Activated T-helper 2 cell treated with anti-CD3 and anti-CD28 coated beads, Interferon-gamma antibody, Interleukin-2, Interleukin-4, amounts not matched to agents 10 μg/mL and 5 μg/mL and 100 μg/mL, durations not matched to agents 14 hours and 24 hours and 36 hours (primary cell): ENCODE measurements at regions of chr5 and their contacts with region 1.

Region 1: DNA sequence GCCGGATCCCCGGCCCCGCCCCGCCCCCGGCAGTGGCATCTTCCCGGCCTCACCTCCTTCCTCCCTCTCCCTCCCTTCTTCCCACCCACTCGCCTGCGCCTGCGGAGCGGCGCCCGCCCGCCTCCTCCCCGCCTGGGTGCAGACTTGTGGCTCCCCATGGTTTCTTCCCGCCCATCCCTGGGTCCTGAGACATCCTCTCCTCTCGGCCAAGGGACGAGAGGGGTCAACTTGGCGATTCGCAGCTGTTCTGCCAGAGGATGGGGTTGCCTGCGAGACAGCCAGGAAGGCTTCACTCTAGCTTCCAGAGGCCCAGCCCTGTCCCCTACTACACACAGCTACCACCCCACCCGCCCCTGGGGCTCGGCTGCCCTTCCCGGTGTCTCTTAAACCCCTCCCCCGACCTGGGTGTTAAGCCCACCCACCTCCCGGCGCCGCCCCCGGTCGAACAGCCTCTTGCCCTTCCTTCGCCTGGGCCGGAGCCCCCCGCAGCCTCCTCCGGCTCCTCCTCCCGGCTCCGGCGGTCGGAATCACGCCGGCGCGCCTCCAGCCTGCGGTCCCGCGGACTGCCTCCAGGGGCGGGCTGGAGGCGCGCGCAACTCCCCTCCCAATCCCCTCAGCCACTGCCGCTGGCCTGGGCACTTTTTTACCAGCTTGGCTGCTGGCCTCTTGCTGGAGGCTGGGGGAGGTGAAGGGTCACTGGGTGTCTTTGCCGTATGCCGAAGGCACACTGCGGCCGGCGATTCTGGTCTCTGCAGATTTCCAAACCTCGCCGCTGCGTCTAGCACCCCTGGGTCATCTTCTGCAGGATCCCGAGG is 1.9 kb downstream of the JADE2 start:
- DNase-seq: peak; percentile 61
- H3K4me3 Mint-ChIP-seq: peak overlapping the region; percentile 97
- H3K27ac Mint-ChIP-seq: peak overlapping the region; percentile 94
- H3K4me1 Mint-ChIP-seq: peaks cover 25% of the 10 kb centered on the region
- H3K27me3 Mint-ChIP-seq: no peaks in the 10 kb centered on the region

Region 2: GRCh38 chr5:134189031-134189430 is 338.3 kb before region 1 on chr5:
- intact Hi-C with region 1: no loop called
- DNase-seq: no peak
- H3K4me3 Mint-ChIP-seq: no peak overlapping the region
- H3K27ac Mint-ChIP-seq: no peak overlapping the region
- H3K4me1 Mint-ChIP-seq: no peaks in the 10 kb centered on the region
- H3K27me3 Mint-ChIP-seq: no peaks in the 10 kb centered on the region

Region 3: DNA sequence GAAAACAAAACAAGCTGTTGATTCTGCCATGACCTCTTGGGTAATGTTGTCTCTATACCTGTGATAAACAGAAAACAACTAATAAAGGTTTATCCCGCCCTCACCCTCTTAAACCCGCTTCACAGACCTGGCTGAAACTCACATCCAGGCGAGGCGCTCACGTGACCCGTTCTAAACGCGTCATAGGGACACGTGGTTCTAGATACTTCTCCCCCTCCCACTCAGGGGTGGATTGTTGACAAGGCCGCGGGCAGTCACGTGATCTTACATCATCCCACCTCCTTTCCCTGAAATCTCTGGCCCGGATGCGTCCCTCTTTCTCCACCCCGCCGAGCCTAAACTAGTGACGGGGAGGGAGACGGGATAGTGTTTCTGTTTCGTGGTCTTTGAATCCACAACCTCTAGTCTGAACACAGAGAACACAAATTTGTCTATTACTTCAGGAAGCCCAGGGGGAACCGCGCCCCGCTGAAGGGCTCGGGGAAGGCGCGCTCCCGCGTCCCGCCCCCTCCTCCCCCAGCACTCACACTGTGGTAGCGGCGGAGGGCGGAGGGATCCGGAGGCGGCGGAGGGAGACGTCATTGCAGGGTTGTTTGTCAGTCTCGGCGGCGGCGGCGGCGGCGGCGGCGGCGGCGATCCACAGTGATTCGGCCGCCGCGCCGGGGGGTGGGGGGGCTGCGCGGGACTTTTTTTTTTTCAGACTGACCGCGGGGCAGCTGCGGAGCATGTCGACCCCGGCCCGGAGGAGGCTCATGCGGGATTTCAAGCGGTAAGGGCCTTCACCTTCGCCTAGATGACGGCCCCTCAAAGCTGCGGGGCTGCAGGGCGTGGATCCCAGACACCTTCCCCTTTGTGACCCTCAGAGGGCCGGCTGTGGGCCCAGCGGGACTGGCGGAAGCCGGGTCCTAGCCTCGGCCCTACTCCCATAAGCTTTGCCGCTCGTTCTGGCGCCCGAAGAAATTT is 156.2 kb before region 1 on chr5 and contains the start of gene UBE2B:
- intact Hi-C with region 1: loop called (anchors 1 kb)
- DNase-seq: peak; percentile 94
- H3K4me3 Mint-ChIP-seq: peak within 1 kb of the TSS; percentile 95
- H3K27ac Mint-ChIP-seq: peak within 1 kb of the TSS; percentile 96
- H3K4me1 Mint-ChIP-seq: peaks cover 44% of the 10 kb centered on the region
- H3K27me3 Mint-ChIP-seq: no peaks in the 10 kb centered on the region
- total RNA-seq, gene UBE2B: 97.2 and 97.5 TPM in 2 replicates

Region 4: GRCh38 chr5:134451936-134452505 is 75.3 kb before region 1 on chr5:
- intact Hi-C with region 1: no loop called
- DNase-seq: no peak
- H3K4me3 Mint-ChIP-seq: no peak overlapping the region
- H3K27ac Mint-ChIP-seq: no peak overlapping the region
- H3K4me1 Mint-ChIP-seq: peaks cover 3% of the 10 kb centered on the region
- H3K27me3 Mint-ChIP-seq: peaks cover 2% of the 10 kb centered on the region

Region 5: GRCh38 chr5:134465816-134466240 is 61.5 kb before region 1 on chr5:
- intact Hi-C with region 1: loop called (anchors 5 kb)
- DNase-seq: peak; percentile 39
- H3K4me3 Mint-ChIP-seq: peak overlapping the region; percentile 68
- H3K27ac Mint-ChIP-seq: peak overlapping the region; percentile 55
- H3K4me1 Mint-ChIP-seq: peaks cover 7% of the 10 kb centered on the region
- H3K27me3 Mint-ChIP-seq: peaks cover 2% of the 10 kb centered on the region

Region 6: GRCh38 chr5:134543820-134544614 is 16.7 kb after region 1 on chr5:
- intact Hi-C with region 1: loop called (anchors 1 kb)
- DNase-seq: peak; percentile 18
- H3K4me3 Mint-ChIP-seq: peak overlapping the region; percentile 74
- H3K27ac Mint-ChIP-seq: peak overlapping the region; percentile 92
- H3K4me1 Mint-ChIP-seq: peaks cover 28% of the 10 kb centered on the region
- H3K27me3 Mint-ChIP-seq: no peaks in the 10 kb centered on the region

Region 7: DNA sequence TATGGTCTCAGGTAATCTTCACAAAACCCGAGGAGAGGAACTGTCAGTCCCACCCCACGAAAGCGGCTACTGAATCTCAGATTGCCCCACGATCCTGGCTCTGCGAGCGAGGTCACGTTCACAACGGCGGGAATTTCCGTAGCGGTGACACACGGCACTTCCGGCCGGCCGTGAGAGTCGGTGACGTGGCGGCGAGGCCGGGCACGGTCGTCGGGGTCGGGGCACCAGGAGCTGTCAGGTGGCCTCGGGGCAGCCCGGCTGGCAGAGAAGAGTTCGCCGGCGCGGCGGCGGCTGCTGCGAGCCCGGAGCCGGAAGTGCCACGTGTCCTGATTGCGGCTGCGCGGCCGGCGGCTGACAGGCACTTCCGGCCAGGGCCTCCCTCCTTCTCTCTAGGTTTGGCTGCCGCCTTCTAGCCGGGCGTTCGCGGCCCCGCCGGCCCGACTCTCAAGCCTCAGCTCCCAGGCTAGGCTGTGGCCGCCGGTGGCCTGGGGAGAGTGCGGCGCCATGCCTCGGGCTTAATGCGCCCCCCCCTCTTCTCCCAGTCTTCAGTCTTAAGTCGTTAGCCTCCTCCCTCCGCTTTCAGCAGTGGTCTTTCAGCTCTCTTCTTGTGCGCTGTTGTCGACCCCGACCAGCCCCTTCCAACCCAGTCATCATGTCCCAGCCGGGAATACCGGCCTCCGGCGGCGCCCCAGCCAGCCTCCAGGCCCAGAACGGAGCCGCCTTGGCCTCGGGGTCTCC is 121.2 kb after region 1 on chr5 and contains the start of gene SEC24A:
- intact Hi-C with region 1: loop called (anchors 1 kb)
- DNase-seq: peak; percentile 88
- H3K4me3 Mint-ChIP-seq: peak within 1 kb of the TSS; percentile 88
- H3K27ac Mint-ChIP-seq: peak within 1 kb of the TSS; percentile 97
- H3K4me1 Mint-ChIP-seq: peaks cover 22% of the 10 kb centered on the region
- H3K27me3 Mint-ChIP-seq: no peaks in the 10 kb centered on the region
- total RNA-seq, gene SEC24A: 33.9 and 34.0 TPM in 2 replicates

Region 8: DNA sequence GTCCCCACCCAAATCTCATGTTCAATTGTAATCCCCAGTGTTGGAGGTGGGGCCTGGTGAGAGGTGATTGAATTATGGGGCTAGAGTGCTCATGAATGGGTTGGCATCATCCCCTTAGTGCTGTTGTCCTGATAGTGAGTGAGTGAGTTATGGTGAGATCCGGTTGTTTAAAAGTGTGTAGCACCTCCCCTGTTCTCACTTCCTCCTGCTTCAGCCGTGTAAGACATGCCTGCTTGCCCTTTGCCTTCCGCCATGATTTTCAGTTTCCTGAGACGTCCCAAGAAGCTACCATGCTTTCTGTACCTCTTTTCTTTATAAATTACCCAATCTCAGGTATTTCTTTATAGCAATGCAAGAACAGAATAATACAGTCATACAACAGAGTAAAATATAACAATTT is 1428.2 kb after region 1 on chr5:
- intact Hi-C with region 1: no loop called
- DNase-seq: no peak
- H3K4me3 Mint-ChIP-seq: no peak overlapping the region
- H3K27ac Mint-ChIP-seq: no peak overlapping the region
- H3K4me1 Mint-ChIP-seq: no peaks in the 10 kb centered on the region
- H3K27me3 Mint-ChIP-seq: peaks cover 18% of the 10 kb centered on the region